Caco-2 (cell line): ENCODE measurements at regions of chr3 and their contacts with region 1.

Region 1: DNA sequence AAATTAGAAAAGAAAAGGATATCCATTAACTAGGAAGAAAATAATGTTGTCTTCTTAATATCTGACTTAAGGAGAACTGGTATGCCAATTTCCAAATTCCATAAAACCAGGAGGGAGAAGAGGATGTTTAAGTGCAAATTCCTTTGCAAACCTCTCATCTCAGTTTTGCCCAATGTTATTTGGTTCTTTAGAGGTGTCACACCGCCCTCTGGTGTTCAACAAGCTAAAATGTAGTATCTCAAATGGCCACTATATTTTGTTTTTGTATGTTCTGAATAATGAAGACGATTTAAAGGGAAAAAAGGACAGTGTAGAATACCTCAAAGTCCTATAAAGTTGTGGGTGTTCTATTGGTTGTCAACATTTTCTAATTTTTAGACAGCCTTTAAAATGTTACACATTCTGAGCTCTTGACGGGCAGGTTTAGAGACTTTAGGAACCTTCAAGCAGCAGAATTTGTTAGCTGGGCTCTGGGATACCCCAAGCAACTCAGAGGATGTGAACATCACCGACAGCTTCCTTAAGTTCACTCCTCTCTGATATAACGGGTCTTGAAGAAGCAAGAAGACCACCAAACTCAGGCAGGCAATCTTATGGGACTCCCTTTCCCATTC is 458.3 kb downstream of the MFSD1 start:
- DNase-seq: peak; percentile 38 to 53
- H3K4me3 ChIP-seq: no peak overlapping the region
- H3K4me3 Mint-ChIP-seq: no peak overlapping the region
- H3K27ac Mint-ChIP-seq: no peak overlapping the region
- H3K4me1 ChIP-seq: no peaks in the 10 kb centered on the region
- H3K4me1 Mint-ChIP-seq: no peaks in the 10 kb centered on the region
- H3K27me3 ChIP-seq: no peaks in the 10 kb centered on the region
- H3K27me3 Mint-ChIP-seq: peaks cover 9% of the 10 kb centered on the region
- CTCF ChIP-seq: peak; percentile 71 to 74

Region 2: GRCh38 chr3:158790901-158791589 is 469.1 kb before region 1 on chr3:
- CTCF ChIA-PET with region 1: no interaction called
- POLR2A ChIA-PET with region 1: no interaction called
- intact Hi-C with region 1: loop called (anchors 1 kb)
- DNase-seq: peak; percentile 44 to 58
- H3K4me3 ChIP-seq: no peak overlapping the region
- H3K4me3 Mint-ChIP-seq: peak overlapping the region; percentile 55
- H3K27ac Mint-ChIP-seq: no peak overlapping the region
- H3K4me1 ChIP-seq: 0 out of 2 replicates have a peak, but pooled peaks cover 4% of the 10 kb centered on the region
- H3K4me1 Mint-ChIP-seq: peaks cover 6% of the 10 kb centered on the region
- H3K27me3 ChIP-seq: no peaks in the 10 kb centered on the region
- H3K27me3 Mint-ChIP-seq: peaks cover 3% of the 10 kb centered on the region
- CTCF ChIP-seq: peak; percentile 73 to 76

Region 3: DNA sequence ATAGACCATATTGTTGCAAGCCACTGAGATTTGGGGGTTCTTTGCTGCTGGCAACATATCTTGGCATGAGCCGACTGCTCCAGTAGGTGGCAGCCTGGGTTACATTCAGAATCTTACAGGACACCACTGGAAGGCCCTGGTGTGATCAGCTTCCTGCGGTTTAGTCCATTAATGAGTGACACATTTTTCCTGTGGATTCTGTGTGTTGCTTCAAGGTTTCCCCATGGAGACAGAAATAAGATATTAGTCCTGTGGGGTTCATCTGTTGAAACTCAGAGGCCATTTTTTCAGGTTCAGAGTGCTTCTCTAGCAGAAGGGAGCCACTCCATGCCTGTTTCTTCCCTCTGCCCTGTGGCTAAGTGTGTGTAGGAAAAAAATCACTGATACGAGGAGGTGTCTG is 342.1 kb before region 1 on chr3:
- CTCF ChIA-PET with region 1: interaction called, 4 read pairs
- POLR2A ChIA-PET with region 1: no interaction called
- intact Hi-C with region 1: loop called (anchors 1 kb)
- DNase-seq: peak; percentile 52 to 55
- H3K4me3 ChIP-seq: no peak overlapping the region
- H3K4me3 Mint-ChIP-seq: no peak overlapping the region
- H3K27ac Mint-ChIP-seq: no peak overlapping the region
- H3K4me1 ChIP-seq: no peaks in the 10 kb centered on the region
- H3K4me1 Mint-ChIP-seq: no peaks in the 10 kb centered on the region
- H3K27me3 ChIP-seq: no peaks in the 10 kb centered on the region
- H3K27me3 Mint-ChIP-seq: peaks cover 7% of the 10 kb centered on the region
- CTCF ChIP-seq: peak; percentile 73 to 82

Region 4: GRCh38 chr3:159029306-159030026 is 230.7 kb before region 1 on chr3:
- CTCF ChIA-PET with region 1: no interaction called
- POLR2A ChIA-PET with region 1: no interaction called
- intact Hi-C with region 1: no loop called
- DNase-seq: no peak
- H3K4me3 ChIP-seq: no peak overlapping the region
- H3K4me3 Mint-ChIP-seq: no peak overlapping the region
- H3K27ac Mint-ChIP-seq: no peak overlapping the region
- H3K4me1 ChIP-seq: no peaks in the 10 kb centered on the region
- H3K4me1 Mint-ChIP-seq: peaks cover 7% of the 10 kb centered on the region
- H3K27me3 ChIP-seq: no peaks in the 10 kb centered on the region
- H3K27me3 Mint-ChIP-seq: no peaks in the 10 kb centered on the region
- CTCF ChIP-seq: no peak

Region 5: DNA sequence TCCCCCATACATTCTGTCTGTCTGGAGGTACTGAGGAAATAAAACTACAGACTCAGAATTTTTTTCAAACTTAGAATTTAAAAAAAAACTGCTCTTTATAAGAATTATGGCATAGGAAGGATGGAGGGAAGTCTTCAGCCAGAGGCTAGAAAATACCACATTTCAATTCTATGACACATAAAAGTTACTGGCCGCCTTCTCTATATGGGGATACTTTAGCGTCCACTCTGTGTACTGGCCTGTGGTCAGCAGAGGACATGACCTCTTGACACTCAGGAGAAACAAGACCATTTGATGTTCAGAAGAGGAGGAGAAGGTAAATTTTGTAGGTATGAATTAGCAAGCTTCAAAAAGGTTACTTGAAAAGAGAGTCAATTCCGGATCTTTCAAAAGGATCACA is 40.9 kb before region 1 on chr3:
- CTCF ChIA-PET with region 1: no interaction called
- POLR2A ChIA-PET with region 1: no interaction called
- intact Hi-C with region 1: no loop called
- DNase-seq: no peak
- H3K4me3 ChIP-seq: no peak overlapping the region
- H3K4me3 Mint-ChIP-seq: no peak overlapping the region
- H3K27ac Mint-ChIP-seq: no peak overlapping the region
- H3K4me1 ChIP-seq: no peaks in the 10 kb centered on the region
- H3K4me1 Mint-ChIP-seq: no peaks in the 10 kb centered on the region
- H3K27me3 ChIP-seq: no peaks in the 10 kb centered on the region
- H3K27me3 Mint-ChIP-seq: no peaks in the 10 kb centered on the region
- CTCF ChIP-seq: no peak

Region 6: GRCh38 chr3:159586571-159587202 is 326.5 kb after region 1 on chr3:
- CTCF ChIA-PET with region 1: no interaction called
- POLR2A ChIA-PET with region 1: no interaction called
- intact Hi-C with region 1: loop called (anchors 1 kb)
- DNase-seq: peak in 1 of 2 experiments; percentile 54
- H3K4me3 ChIP-seq: no peak overlapping the region
- H3K4me3 Mint-ChIP-seq: no peak overlapping the region
- H3K27ac Mint-ChIP-seq: no peak overlapping the region
- H3K4me1 ChIP-seq: peaks cover 32% of the 10 kb centered on the region
- H3K4me1 Mint-ChIP-seq: peaks cover 18% of the 10 kb centered on the region
- H3K27me3 ChIP-seq: no peaks in the 10 kb centered on the region
- H3K27me3 Mint-ChIP-seq: peaks cover 3% of the 10 kb centered on the region
- CTCF ChIP-seq: peak; percentile 54 to 72

Region 7: GRCh38 chr3:159884661-159885402 is 624.7 kb after region 1 on chr3:
- CTCF ChIA-PET with region 1: no interaction called
- POLR2A ChIA-PET with region 1: no interaction called
- intact Hi-C with region 1: loop called (anchors 10 kb)
- DNase-seq: peak in 1 of 2 experiments; percentile 34
- H3K4me3 ChIP-seq: no peak overlapping the region
- H3K4me3 Mint-ChIP-seq: no peak overlapping the region
- H3K27ac Mint-ChIP-seq: no peak overlapping the region
- H3K4me1 ChIP-seq: no peaks in the 10 kb centered on the region
- H3K4me1 Mint-ChIP-seq: no peaks in the 10 kb centered on the region
- H3K27me3 ChIP-seq: no peaks in the 10 kb centered on the region
- H3K27me3 Mint-ChIP-seq: no peaks in the 10 kb centered on the region
- CTCF ChIP-seq: peak; percentile 47 to 51